ENCODE measurements at regions of chr19 and their contacts with region 1.

Region 1: DNA sequence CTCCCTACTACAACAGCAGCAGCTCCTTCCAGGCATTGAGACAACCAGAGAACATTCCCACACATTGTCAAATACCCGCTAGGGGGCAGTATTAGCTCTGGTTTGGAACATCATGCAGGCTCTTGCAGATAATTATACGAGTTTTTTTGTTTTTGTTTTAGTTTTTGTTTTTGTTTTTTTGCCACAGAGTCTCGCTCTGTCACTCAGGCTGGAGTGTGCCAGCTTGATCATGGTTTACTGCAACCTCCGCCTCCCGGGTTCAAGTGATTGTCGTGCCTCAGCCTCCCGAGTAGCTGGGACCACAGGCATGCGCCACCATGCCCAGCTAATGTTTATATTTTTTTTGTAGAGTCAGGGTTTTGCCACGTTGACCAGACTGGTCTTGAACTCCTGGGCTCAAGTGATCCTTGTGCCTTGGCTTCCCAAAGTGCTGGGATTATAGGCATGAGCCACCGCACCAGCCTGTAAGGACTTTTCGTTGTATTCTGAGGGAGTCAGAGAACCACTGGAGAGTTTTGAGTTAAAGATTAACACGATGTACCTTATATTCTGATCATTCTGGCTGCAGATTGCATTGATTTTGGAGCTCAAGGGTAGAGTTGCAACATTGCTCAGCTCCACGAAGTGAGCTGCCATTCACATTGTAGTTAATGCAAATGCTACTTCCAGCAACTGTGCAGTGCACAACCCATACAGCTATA is 41.7 kb upstream of the CEACAM20 start:
- DNase-seq: peak; percentile 72
- ATAC-seq: peak; percentile 68
- H3K4me3 Mint-ChIP-seq: no peak overlapping the region
- H3K27ac Mint-ChIP-seq: no peak overlapping the region
- H3K4me1 Mint-ChIP-seq: no peaks in the 10 kb centered on the region
- H3K27me3 Mint-ChIP-seq: peaks cover 5% of the 10 kb centered on the region

Region 2: GRCh38 chr19:44643605-44644401 is 72.7 kb after region 1 on chr19 and contains the start of gene PVR:
- CTCF ChIA-PET with region 1: interaction called, 10 read pairs
- POLR2A ChIA-PET with region 1: no interaction called
- intact Hi-C with region 1: no loop called
- DNase-seq: peak; percentile 68
- ATAC-seq: peak; percentile 83
- H3K4me3 Mint-ChIP-seq: peak within 1 kb of the TSS; percentile 81
- H3K27ac Mint-ChIP-seq: no peak within 1 kb of the TSS
- H3K4me1 Mint-ChIP-seq: peaks cover 4% of the 10 kb centered on the region
- H3K27me3 Mint-ChIP-seq: peaks cover 14% of the 10 kb centered on the region
- total RNA-seq, gene PVR: 10.9 to 11.3 TPM

Region 3: GRCh38 chr19:44653977-44654774 is 83.0 kb after region 1 on chr19:
- CTCF ChIA-PET with region 1: interaction called, 35 read pairs
- POLR2A ChIA-PET with region 1: no interaction called
- intact Hi-C with region 1: loop called (anchors 1 kb)
- DNase-seq: peak; percentile 89
- ATAC-seq: peak; percentile 97
- H3K4me3 Mint-ChIP-seq: no peak overlapping the region
- H3K27ac Mint-ChIP-seq: no peak overlapping the region
- H3K4me1 Mint-ChIP-seq: peaks cover 11% of the 10 kb centered on the region
- H3K27me3 Mint-ChIP-seq: no peaks in the 10 kb centered on the region